PC-9 (cell line): ENCODE measurements at regions of chr4 and their contacts with region 1.

Region 1: GRCh38 chr4:15690020-15690809 is 8.6 kb downstream of the FAM200B start:
- DNase-seq: peak; percentile 47 to 88
- H3K4me3 ChIP-seq: no peak overlapping the region
- H3K27ac ChIP-seq: peak overlapping the region; percentile 82
- H3K4me1 ChIP-seq: peaks cover 37% of the 10 kb centered on the region
- H3K27me3 ChIP-seq: no peaks in the 10 kb centered on the region
- CTCF ChIP-seq: no peak

Region 2: DNA sequence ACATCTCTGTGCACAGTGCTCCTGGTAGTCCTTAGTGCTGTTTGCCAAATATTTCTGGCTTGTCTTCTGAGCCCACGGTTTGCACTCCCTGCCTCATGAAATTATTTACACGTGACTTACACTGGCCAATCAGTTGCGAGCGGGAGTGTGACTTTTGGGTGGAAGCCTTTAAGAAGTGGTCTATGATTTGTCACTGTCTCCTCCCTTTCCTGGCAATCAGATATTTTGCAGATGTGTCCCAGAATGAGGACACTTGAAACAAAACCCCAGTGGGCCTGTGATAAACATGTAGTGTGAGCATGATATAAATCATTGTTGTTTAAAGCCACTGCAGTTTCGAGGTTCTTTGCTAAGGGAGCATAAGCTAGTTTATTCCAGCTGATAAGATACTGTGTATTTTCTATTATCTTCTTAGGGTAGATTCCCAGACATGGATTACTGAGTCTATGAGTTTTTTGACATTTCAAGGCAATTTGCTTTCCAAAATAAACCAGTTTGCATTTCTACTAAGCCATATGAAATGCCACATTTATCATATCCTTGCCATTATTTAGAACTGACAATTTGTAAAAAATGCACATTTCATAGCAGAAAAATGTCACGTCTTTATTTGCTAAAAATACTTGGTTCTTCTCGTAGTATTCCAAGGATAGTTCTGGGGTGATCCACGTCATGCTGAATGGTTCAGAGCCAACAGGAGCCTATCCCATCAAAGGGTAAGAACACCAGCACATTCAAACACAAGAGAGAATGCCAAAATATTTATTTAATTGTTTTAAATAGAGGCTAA is 24.6 kb after region 1 on chr4:
- CTCF ChIA-PET with region 1: no interaction called
- POLR2A ChIA-PET with region 1: no interaction called
- intact Hi-C with region 1: no loop called
- DNase-seq: no peak
- H3K4me3 ChIP-seq: no peak overlapping the region
- H3K27ac ChIP-seq: no peak overlapping the region
- H3K4me1 ChIP-seq: no peaks in the 10 kb centered on the region
- H3K27me3 ChIP-seq: no peaks in the 10 kb centered on the region
- CTCF ChIP-seq: no peak

Region 3: GRCh38 chr4:15778289-15779241 is 88.3 kb after region 1 on chr4 and contains the start of gene CD38:
- CTCF ChIA-PET with region 1: no interaction called
- POLR2A ChIA-PET with region 1: interaction called, 8 read pairs
- intact Hi-C with region 1: loop called (anchors 1 kb)
- DNase-seq: peak in 1 of 2 experiments; percentile 15
- H3K4me3 ChIP-seq: no peak within 1 kb of the TSS
- H3K27ac ChIP-seq: no peak within 1 kb of the TSS
- H3K4me1 ChIP-seq: peaks cover 11% of the 10 kb centered on the region
- H3K27me3 ChIP-seq: no peaks in the 10 kb centered on the region
- CTCF ChIP-seq: no peak
- total RNA-seq, gene CD38: 0.90 and 1.3 TPM in 2 replicates

Region 4: GRCh38 chr4:15811703-15812337 is 121.6 kb after region 1 on chr4:
- CTCF ChIA-PET with region 1: no interaction called
- POLR2A ChIA-PET with region 1: no interaction called
- intact Hi-C with region 1: no loop called
- DNase-seq: peak; percentile 20 to 71
- H3K4me3 ChIP-seq: no peak overlapping the region
- H3K27ac ChIP-seq: peak overlapping the region; percentile 54
- H3K4me1 ChIP-seq: peaks cover 10% of the 10 kb centered on the region; the same call in 1 of the 2 replicates
- H3K27me3 ChIP-seq: no peaks in the 10 kb centered on the region
- CTCF ChIP-seq: no peak